ENCODE measurements at regions of chr15 and their contacts with region 1.

Region 1: DNA sequence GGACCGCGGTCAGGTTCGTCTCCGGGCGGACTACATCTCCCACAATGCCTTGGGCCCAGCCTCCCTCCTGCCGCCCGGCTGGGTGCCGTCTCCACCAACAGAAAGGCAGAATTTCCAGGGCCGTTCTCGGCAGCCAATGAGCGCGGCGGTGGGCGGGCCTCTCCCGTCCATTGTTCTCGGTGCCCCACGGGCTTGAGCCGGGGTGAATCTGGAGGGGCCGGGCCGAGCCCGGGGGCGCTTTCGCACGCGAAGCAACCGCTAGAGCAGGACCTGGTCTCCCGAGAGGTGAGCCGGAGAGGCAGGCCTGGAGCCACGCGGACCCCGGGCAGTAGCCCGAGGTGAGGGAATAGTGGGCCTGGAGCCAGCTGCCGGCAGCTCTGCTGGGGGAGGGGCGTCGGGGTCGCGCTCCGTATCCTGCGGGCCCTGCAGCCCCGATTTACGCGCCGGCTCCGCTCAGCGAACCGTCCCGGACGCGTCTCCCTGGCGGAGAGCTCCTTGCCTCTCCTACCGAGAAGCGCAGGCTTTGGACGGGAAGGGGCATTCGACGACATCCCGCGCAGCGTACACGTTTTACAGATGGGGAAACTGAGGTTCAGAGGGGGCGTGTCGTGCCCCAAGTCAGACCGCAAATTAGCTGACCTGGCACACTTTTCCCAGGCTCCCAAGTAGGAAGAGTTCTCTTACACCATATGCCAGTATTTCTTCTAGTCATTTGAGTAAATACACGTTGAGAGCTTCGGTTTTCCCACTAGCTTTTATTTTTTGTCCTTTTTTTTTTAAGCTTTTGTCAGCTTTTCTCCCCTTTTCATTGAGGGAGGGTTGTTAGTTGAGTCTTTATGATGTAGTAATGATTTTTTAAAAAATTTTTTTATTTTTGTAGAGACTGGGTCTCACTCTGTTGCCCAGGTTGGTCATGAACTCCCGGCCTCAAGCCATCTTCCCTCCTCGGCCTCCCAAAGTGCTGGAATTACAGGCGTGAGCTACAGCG is at the start of gene ZSCAN2:
- DNase-seq: peak; percentile 96
- H3K4me3 ChIP-seq: peak within 1 kb of the TSS; percentile 46 to 66 (median 54)
- H3K27ac ChIP-seq: peak within 1 kb of the TSS; percentile 56
- H3K4me1 ChIP-seq: no peaks in the 10 kb centered on the region
- H3K27me3 ChIP-seq: no peaks in the 10 kb centered on the region
- CTCF ChIP-seq: peak in 1 of 2 donors; percentile 10
- POLR2A ChIP-seq: peak; percentile 56
- total RNA-seq, gene ZSCAN2: 13.5 TPM in 2 replicates

Region 2: DNA sequence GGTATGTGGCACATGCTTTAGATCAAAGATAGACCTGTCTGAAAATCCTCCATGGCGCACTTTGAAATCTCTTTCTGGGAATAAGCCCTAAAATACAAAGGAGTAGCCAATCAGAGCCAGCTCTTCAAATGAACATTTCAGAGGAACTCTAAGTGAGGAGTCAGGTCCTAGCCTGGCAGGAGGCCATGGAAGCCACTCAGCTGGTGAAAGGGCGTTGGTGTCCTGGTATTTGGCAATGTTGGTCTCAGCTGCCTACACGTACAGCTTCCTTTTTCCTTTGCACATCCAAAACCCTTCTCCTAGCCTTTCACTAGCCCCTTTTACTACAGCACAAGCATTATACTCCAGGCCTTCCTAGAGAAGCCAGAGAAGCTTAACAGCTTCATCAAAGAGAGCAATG is 47.4 kb after region 1 on chr15:
- CTCF ChIA-PET with region 1: interaction called, 23 read pairs
- POLR2A ChIA-PET with region 1: no interaction called
- dilution Hi-C with region 1: no loop called
- intact Hi-C with region 1: no loop called
- DNase-seq: no peak
- H3K4me3 ChIP-seq: no peak overlapping the region
- H3K27ac ChIP-seq: no peak overlapping the region
- H3K4me1 ChIP-seq: peaks cover 14% of the 10 kb centered on the region
- H3K27me3 ChIP-seq: no peaks in the 10 kb centered on the region
- CTCF ChIP-seq: no peak
- POLR2A ChIP-seq: no peak

Region 3: DNA sequence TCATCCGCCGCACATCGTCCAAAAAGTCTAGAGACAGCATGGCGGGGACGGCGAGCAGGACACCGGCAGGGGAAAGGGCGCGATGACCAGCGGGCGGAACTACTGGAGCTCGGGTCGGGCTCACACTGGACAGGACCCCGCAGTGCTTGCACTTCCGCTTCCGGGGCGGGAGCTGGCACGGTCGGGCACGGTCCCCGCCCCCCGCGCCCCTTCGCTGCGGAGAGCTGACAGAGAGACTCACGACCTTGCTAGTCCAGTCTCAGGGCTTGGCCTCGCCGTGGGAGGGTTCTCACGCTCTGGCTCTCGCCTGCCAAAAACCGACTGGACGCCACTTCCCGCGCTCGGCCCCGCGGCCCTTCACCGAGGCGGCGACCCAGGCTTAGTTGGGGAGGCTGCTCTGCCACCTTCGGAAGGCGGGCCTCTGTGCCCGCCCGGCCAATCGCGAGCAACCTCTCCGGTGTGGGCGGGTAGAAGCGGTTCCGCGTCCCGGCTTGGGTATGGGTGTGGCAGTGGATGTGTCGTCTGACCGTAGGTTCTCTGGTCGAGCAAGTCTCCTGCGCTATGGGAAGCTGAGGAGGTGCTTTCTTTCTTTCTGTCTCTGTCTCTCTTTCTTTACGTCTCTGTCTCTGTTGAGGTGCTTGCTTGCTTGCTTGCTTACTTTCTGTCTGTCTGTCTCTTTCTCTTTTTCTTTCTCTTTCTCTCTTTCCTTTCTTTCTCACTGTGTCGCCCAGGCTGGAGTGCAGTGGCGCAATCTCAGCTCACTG is 115.1 kb after region 1 on chr15 and contains the start of gene SEC11A:
- CTCF ChIA-PET with region 1: interaction called, 4 read pairs
- POLR2A ChIA-PET with region 1: no interaction called
- dilution Hi-C with region 1: no loop called
- intact Hi-C with region 1: loop called (anchors 1 kb)
- DNase-seq: peak; percentile 97
- H3K4me3 ChIP-seq: peak within 1 kb of the TSS; percentile 55 to 95 (median 85)
- H3K27ac ChIP-seq: peak within 1 kb of the TSS; percentile 56
- H3K4me1 ChIP-seq: peaks cover 22% of the 10 kb centered on the region
- H3K27me3 ChIP-seq: no peaks in the 10 kb centered on the region
- CTCF ChIP-seq: no peak
- POLR2A ChIP-seq: peak; percentile 97
- total RNA-seq, gene SEC11A: 192 and 204 TPM in 2 replicates

Region 4: DNA sequence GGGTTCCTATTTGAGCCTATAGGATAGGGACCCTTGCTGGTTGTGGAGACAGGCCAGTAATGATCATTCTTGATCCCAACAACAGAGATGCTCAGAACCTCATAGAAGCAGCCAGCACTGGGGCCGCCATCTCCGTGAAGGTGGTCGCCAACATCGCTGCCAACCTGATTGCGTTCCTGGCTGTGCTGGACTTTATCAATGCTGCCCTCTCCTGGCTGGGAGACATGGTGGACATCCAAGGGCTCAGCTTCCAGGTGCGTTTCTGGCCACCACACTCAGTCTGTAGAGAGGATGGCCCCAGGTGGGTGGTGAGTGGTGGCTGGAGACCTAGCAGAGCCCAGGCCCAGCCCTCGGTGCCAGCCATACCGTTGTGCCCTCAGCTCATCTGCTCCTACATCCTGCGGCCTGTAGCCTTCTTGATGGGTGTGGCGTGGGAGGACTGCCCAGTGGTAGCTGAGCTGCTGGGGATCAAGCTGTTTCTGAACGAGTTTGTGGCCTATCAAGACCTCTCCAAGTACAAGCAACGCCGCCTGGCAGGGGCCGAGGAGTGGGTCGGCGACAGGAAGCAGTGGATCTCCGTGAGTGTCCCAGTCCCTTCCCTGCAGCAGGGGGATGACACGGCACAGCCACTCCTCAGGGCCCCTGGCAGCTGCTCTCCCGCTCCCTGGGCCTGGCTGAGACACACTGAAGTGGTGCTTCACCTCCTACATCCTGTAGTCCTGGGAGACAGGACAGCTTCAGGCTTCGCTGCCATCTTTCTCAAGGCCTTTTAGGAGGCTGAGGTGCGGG is 334.0 kb after region 1 on chr15:
- CTCF ChIA-PET with region 1: interaction called, 12 read pairs
- POLR2A ChIA-PET with region 1: no interaction called
- dilution Hi-C with region 1: no loop called
- intact Hi-C with region 1: no loop called
- DNase-seq: no peak
- H3K4me3 ChIP-seq: no peak overlapping the region
- H3K27ac ChIP-seq: no peak overlapping the region
- H3K4me1 ChIP-seq: no peaks in the 10 kb centered on the region
- H3K27me3 ChIP-seq: no peaks in the 10 kb centered on the region
- CTCF ChIP-seq: peak; percentile 5 to 26
- POLR2A ChIP-seq: no peak

Region 5: GRCh38 chr15:85168642-85169173 is 567.6 kb after region 1 on chr15:
- CTCF ChIA-PET with region 1: interaction called, 11 read pairs
- POLR2A ChIA-PET with region 1: no interaction called
- dilution Hi-C with region 1: no loop called
- intact Hi-C with region 1: no loop called
- DNase-seq: peak; percentile 55
- H3K4me3 ChIP-seq: peak overlapping the region in 2 of 3 experiments; percentile 10 to 32
- H3K27ac ChIP-seq: no peak overlapping the region
- H3K4me1 ChIP-seq: no peaks in the 10 kb centered on the region
- H3K27me3 ChIP-seq: no peaks in the 10 kb centered on the region
- CTCF ChIP-seq: peak; percentile 58 to 63
- POLR2A ChIP-seq: no peak